Common myeloid progenitor, CD34-positive (primary cell): ENCODE measurements at regions of chr2 and their contacts with region 1.

Region 1: GRCh38 chr2:193112986-193113385 is 918.3 kb upstream of the TMEFF2 start:
- DNase-seq: no peak
- H3K4me3 ChIP-seq: no peak overlapping the region
- H3K27ac ChIP-seq: no peak overlapping the region
- H3K4me1 ChIP-seq: peaks cover 0 to 5% (median 2%) of the 10 kb centered on the region in 4 experiments
- H3K27me3 ChIP-seq: no peaks in the 10 kb centered on the region

Region 2: GRCh38 chr2:193124815-193125214 is 11.8 kb after region 1 on chr2:
- CTCF ChIA-PET with region 1: no interaction called
- POLR2A ChIA-PET with region 1: no interaction called
- DNase-seq: no peak
- H3K4me3 ChIP-seq: no peak overlapping the region
- H3K27ac ChIP-seq: no peak overlapping the region
- H3K4me1 ChIP-seq: no peaks in the 10 kb centered on the region
- H3K27me3 ChIP-seq: no peaks in the 10 kb centered on the region

Region 3: GRCh38 chr2:193584522-193584938 is 471.5 kb after region 1 on chr2:
- CTCF ChIA-PET with region 1: interaction called, 17 read pairs
- POLR2A ChIA-PET with region 1: no interaction called
- DNase-seq: peak; percentile 61 to 72 (median 68)
- H3K4me3 ChIP-seq: no peak overlapping the region
- H3K27ac ChIP-seq: no peak overlapping the region
- H3K4me1 ChIP-seq: peaks cover 0 to 22% (median 9%) of the 10 kb centered on the region in 4 experiments
- H3K27me3 ChIP-seq: no peaks in the 10 kb centered on the region